ENCODE measurements at regions of chr1 and their contacts with region 1.

Region 1: GRCh38 chr1:180515864-180516388 is 13.5 kb upstream of the ACBD6 start:
- DNase-seq: peak; percentile 73
- CTCF ChIP-seq: peak; percentile 86

Region 2: GRCh38 chr1:180444522-180444921 is 71.4 kb before region 1 on chr1:
- CTCF ChIA-PET with region 1: no interaction called
- POLR2A ChIA-PET with region 1: no interaction called
- DNase-seq: no peak
- CTCF ChIP-seq: no peak

Region 3: GRCh38 chr1:180502360-180503273 is 13.3 kb before region 1 on chr1 and contains the start of gene ACBD6:
- CTCF ChIA-PET with region 1: interaction called, 55 read pairs
- POLR2A ChIA-PET with region 1: no interaction called
- DNase-seq: peak; percentile 89
- CTCF ChIP-seq: no peak

Region 4: DNA sequence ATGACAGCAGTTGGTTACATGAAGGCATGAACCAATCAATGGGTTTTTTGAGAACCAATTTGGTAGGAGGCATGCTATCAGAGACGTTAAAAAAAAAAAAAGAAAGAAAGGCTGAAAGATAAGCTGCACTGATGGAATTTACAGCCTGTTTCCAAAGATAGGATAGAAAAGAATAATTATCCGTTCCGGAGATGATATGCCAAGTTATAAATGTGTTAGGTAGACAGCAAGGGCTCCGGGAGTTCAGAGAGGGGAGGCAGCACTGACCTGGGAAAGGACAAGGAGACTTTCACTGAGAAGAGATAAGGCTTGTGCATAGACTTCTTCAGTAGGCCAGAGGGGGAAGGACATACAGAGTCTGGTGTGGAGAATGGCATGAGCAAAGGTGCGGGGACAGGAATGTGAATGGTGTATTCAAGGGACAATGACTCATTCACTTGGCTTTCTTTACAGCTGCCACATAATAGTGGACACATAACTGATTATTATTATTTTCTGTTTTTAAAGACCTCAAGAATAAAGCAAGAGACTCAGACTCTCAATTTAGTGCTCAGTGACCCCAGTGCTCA is 11.3 kb after region 1 on chr1:
- CTCF ChIA-PET with region 1: interaction called, 32 read pairs
- POLR2A ChIA-PET with region 1: no interaction called
- DNase-seq: no peak
- CTCF ChIP-seq: no peak

Region 5: DNA sequence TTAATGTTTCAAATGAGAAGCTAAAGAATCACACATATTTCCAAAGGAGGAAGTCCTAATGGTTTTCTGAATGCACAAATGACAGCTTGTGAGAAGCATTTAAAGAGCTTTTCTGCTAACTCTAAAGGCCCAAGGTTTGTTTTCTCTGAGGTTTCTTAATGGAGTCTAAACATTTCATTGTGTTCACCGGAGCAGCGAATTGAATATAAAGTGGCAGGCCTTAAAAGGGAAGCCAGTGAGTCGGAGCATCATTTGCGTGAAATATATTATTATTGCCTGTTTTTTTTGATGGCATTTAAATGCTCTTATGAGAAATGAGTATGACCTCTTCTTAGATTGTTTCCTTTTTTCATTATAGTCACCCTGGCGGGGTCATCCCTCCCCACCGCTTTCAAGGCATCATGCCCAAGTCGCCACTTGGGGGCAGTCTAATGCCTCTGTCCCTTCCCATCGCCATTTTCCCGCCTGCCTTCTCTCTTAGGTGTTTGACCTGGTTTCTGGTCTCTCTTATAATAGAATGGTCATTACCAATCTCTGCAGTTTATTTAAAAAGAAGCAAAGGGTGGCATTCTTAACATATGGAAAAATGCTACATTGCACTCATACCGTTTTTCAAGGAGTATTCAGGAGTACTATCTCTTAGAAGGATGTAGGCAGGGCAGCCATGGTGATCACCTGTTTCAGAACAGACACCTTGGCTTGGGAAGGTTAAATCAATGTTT is 17.5 kb after region 1 on chr1:
- CTCF ChIA-PET with region 1: interaction called, 20 read pairs
- POLR2A ChIA-PET with region 1: no interaction called
- DNase-seq: peak; percentile 72
- CTCF ChIP-seq: peak; percentile 88

Region 6: DNA sequence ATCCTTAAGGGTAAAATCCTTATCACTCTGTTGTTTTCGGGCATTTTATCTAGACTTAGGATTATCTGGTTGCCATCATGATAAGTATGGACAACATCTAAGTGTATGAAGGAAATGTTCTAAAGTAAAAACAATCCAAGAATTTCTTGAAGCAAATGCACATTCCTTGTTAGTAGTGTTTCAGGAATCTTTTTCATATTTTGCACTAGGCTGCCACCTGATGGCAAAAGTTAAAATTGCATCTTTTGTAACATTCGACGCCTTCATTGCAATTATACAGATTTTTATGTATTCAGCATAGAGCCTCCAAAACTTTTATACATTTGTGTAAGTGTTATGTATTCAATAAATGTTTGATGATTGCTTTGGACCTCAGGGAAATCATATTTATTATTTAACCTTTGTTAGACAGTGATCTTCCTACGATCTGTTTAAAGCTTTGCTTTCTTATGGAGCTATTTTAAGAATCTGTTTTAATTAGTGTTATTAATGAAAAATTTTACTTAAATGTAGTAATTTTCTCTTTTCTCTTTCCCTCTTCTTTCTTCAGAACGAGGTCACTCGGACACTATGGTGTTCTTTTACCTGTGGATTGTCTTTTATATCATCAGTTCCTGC is 347.3 kb after region 1 on chr1:
- CTCF ChIA-PET with region 1: interaction called, 63 read pairs
- POLR2A ChIA-PET with region 1: no interaction called
- DNase-seq: no peak
- CTCF ChIP-seq: peak; percentile 72

Measured in GM10248 (cell line).